CD8-positive, alpha-beta memory T cell (primary cell): ENCODE measurements at regions of chr1 and their contacts with region 1.

Region 1: DNA sequence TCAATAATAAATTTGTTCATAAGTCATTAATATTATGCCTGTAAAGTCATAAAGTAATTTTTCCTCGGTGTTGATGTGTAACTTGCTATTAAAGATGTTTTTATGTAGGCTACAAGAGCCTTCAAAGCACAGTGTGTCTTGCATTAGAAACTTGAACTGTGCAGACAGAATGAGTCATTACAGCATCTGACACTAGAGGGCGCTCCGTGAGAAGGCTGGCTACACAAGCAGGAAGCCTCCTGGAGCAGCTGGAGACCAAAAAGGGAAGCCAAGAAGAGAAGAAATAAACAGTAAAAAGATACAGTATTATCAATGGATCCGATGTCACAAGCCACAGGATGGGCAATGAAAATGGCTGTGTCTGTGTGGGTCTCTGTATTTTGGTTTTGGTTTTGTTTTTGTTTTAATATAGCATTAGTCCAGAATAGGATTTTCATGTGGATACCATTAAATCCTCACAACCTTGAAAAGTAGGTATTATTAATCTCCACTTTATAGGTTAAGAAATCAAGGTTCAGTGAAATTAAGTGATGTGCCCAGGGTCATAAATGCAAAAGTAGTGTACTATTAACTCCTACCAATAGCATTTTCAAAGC is 16.1 kb upstream of the LRRC8D start:
- DNase-seq: peak; percentile 60 to 86 (median 74)
- H3K4me3 ChIP-seq: no peak overlapping the region
- H3K4me3 Mint-ChIP-seq: no peak overlapping the region
- H3K27ac ChIP-seq: no peak overlapping the region
- H3K27ac Mint-ChIP-seq: no peak overlapping the region
- H3K4me1 ChIP-seq: no peaks in the 10 kb centered on the region
- H3K4me1 Mint-ChIP-seq: no peaks in the 10 kb centered on the region
- H3K27me3 ChIP-seq: no peaks in the 10 kb centered on the region
- H3K27me3 Mint-ChIP-seq: peaks cover 3 to 5% of the 10 kb centered on the region in 2 donors

Region 2: DNA sequence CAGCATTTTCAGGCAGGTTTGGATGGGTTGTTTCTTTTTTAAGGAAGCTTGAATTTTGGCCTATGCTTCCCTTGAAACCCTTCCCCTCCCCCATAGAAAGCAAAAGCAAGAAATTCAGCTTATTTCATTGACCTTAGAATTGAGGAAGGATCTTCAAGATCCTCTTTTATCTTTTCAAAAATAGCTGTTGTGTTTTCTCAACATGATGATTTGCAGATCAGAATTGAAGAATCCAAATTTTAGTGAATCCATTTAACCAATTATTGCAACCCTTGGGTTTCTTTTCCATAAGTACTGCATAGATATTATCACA is 98.1 kb before region 1 on chr1:
- CTCF ChIA-PET with region 1: no interaction called
- POLR2A ChIA-PET with region 1: no interaction called
- DNase-seq: no peak
- H3K4me3 ChIP-seq: no peak overlapping the region
- H3K4me3 Mint-ChIP-seq: no peak overlapping the region
- H3K27ac ChIP-seq: no peak overlapping the region
- H3K27ac Mint-ChIP-seq: peak overlapping the region in 4 of 8 donors; percentile 8 to 54 (median 35)
- H3K4me1 ChIP-seq: peaks cover 8% of the 10 kb centered on the region
- H3K4me1 Mint-ChIP-seq: peaks cover 56 to 82% (median 78%) of the 10 kb centered on the region in 3 donors
- H3K27me3 ChIP-seq: no peaks in the 10 kb centered on the region
- H3K27me3 Mint-ChIP-seq: no peaks in the 10 kb centered on the region

Region 3: GRCh38 chr1:89831462-89832120 is 26.9 kb after region 1 on chr1:
- CTCF ChIA-PET with region 1: no interaction called
- POLR2A ChIA-PET with region 1: no interaction called
- DNase-seq: no peak
- H3K4me3 ChIP-seq: no peak overlapping the region
- H3K4me3 Mint-ChIP-seq: no peak overlapping the region
- H3K27ac ChIP-seq: no peak overlapping the region
- H3K27ac Mint-ChIP-seq: peak overlapping the region in 1 of 8 donors; percentile 73
- H3K4me1 ChIP-seq: no peaks in the 10 kb centered on the region
- H3K4me1 Mint-ChIP-seq: peaks cover under 1 to 10% (median 4%) of the 10 kb centered on the region in 3 donors
- H3K27me3 ChIP-seq: no peaks in the 10 kb centered on the region
- H3K27me3 Mint-ChIP-seq: no peaks in the 10 kb centered on the region

Region 4: DNA sequence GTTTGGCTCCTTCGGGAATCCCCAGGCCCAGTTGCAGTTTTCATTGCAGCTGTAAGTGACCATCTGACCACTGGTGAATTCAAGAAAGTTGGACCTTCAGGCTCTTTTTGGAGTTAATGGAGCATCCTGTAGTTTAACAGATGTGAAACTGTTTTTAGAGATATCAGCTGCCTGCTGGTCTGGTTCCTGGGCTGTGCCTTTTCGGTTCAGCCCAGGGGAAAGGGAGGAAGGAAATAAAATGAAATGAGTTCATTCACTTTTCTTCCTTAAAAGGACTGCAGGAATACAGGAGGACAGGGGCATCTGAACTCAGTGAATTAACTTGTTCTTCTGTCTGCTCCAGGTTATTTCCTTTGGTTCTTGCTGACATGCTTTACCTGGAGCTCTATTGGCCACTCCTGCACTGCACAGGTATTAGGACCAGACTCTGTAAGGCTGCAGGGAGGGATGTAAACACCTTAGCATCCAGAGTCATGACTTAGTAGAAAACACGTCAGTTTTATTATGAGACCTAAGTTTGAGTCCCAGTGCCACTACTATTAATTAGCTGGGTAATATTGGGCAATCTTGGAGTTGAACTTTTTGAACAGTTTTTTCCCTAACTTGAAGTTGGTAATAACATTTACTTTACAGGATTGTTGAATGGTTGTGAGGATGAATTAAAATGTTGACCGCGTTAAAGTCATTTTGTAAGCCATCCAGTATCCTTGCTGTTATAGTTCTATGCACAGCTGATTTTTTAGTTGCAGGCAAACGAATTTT is 99.7 kb after region 1 on chr1:
- CTCF ChIA-PET with region 1: no interaction called
- POLR2A ChIA-PET with region 1: no interaction called
- DNase-seq: no peak
- H3K4me3 ChIP-seq: no peak overlapping the region
- H3K4me3 Mint-ChIP-seq: no peak overlapping the region
- H3K27ac ChIP-seq: peak overlapping the region; percentile 68
- H3K27ac Mint-ChIP-seq: peak overlapping the region in 2 of 8 donors; percentile 37 to 84
- H3K4me1 ChIP-seq: peaks cover 8% of the 10 kb centered on the region
- H3K4me1 Mint-ChIP-seq: peaks cover 38 to 78% (median 68%) of the 10 kb centered on the region in 3 donors
- H3K27me3 ChIP-seq: no peaks in the 10 kb centered on the region
- H3K27me3 Mint-ChIP-seq: no peaks in the 10 kb centered on the region

Region 5: DNA sequence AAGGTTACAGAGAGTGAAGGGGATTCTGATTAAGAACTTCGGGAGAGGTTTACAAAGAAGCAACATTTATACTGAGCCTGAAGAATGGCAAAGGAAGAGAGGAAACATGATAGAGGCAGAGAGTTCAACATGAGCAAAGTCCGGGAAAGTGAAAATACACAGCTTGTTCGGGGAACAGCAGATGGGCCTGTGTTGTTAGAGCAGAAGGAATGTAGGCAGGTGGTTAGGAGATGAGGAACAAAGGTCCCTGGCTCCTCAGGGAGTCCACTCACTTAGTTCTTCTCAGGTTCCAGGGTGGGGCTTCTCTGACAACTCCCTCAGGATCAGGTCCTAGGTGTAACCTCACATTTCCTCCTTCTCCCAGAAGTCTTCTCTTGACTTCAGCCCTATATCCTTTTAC is 185.1 kb after region 1 on chr1:
- CTCF ChIA-PET with region 1: interaction called, 22 read pairs
- POLR2A ChIA-PET with region 1: no interaction called
- DNase-seq: no peak
- H3K4me3 ChIP-seq: no peak overlapping the region
- H3K4me3 Mint-ChIP-seq: no peak overlapping the region
- H3K27ac ChIP-seq: no peak overlapping the region
- H3K27ac Mint-ChIP-seq: no peak overlapping the region
- H3K4me1 ChIP-seq: peaks cover 4% of the 10 kb centered on the region
- H3K4me1 Mint-ChIP-seq: peaks cover 0 to 3% (median 0%) of the 10 kb centered on the region in 3 donors
- H3K27me3 ChIP-seq: no peaks in the 10 kb centered on the region
- H3K27me3 Mint-ChIP-seq: no peaks in the 10 kb centered on the region